ENCODE measurements at regions of chrX and their contacts with region 1.

Region 1: GRCh38 chrX:48917139-48918001 is 1.5 kb downstream of the PIM2 start:
- DNase-seq: peak; percentile 88
- ATAC-seq: peak; percentile 64
- H3K4me3 ChIP-seq: peak overlapping the region; percentile 47 to 85 (median 75); a peak in 5 of 6 replicates
- H3K27ac ChIP-seq: peak overlapping the region; percentile 54
- H3K4me1 ChIP-seq: peaks cover 31% of the 10 kb centered on the region
- H3K27me3 ChIP-seq: no peaks in the 10 kb centered on the region
- CTCF ChIP-seq: peak; percentile 91
- EP300 ChIP-seq: no peak
- POLR2A ChIP-seq: no peak
- RAD21 ChIP-seq: peak; percentile 32

Region 2: GRCh38 chrX:48648336-48648751 is 269.0 kb before region 1 on chrX:
- CTCF ChIA-PET with region 1: no interaction called
- POLR2A ChIA-PET with region 1: no interaction called
- in situ Hi-C with region 1: no loop called
- intact Hi-C with region 1: loop called (anchors 5 kb)
- DNase-seq: peak; percentile 28
- ATAC-seq: peak; percentile 69
- H3K4me3 ChIP-seq: no peak overlapping the region
- H3K27ac ChIP-seq: no peak overlapping the region
- H3K4me1 ChIP-seq: no peaks in the 10 kb centered on the region
- H3K27me3 ChIP-seq: 0 out of 5 replicates have a peak, but pooled peaks cover 0 to 3% of the 10 kb centered on the region in 2 experiments
- CTCF ChIP-seq: peak; percentile 63
- EP300 ChIP-seq: no peak
- POLR2A ChIP-seq: no peak
- RAD21 ChIP-seq: no peak

Region 3: DNA sequence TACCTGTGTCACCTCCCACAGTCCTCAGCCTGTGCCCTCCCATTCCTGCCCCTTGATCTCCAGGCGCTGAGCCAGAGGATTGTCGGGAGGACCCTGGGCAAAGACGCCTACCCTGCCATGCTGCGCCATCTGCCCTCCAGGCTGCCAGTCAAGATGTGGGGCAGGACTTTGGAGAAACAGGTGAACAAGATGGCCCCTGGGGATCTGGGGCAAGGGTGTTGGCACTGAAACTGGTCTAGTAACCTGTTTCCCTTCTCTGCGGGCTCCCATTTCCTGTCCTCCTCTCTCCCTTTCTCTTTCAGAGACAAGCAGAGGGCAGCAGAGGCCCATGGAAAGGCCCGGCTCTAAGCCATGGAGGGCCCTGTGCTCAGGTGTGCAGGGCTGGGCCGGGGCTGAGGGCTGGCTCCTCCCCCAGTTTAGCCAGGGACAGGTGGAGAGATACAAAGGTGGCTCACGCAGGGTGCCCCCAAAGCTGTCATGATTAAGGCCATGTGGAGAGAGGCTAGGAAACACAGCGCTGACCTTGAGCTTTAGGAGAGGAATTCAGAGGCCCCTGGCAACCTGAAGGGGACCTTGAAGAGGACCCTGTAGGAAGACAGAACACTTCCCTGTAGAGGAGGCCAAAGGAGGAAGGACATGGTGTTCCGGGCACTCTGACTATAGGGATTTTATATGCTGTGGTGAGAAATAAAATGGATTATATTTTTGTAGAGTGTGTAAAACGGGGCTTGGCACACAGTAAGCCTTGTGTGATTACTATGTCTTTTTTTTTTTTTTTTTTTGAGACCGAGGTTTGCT is 155.5 kb before region 1 on chrX and contains the start of gene GLOD5:
- CTCF ChIA-PET with region 1: interaction called, 5 read pairs
- POLR2A ChIA-PET with region 1: no interaction called
- in situ Hi-C with region 1: no loop called
- intact Hi-C with region 1: loop called (anchors 10 kb)
- DNase-seq: peak; percentile 45
- ATAC-seq: peak; percentile 99
- H3K4me3 ChIP-seq: peak within 1 kb of the TSS; percentile 35 to 62 (median 59); a peak in 4 of 6 replicates
- H3K27ac ChIP-seq: no peak within 1 kb of the TSS
- H3K4me1 ChIP-seq: peaks cover 7% of the 10 kb centered on the region; the same call in 1 of the 2 replicates
- H3K27me3 ChIP-seq: no peaks in the 10 kb centered on the region
- CTCF ChIP-seq: peak; percentile 86
- EP300 ChIP-seq: no peak
- POLR2A ChIP-seq: no peak
- RAD21 ChIP-seq: peak; percentile 74
- total RNA-seq, gene GLOD5: 0.73 and 0.93 TPM in 2 replicates

Region 4: DNA sequence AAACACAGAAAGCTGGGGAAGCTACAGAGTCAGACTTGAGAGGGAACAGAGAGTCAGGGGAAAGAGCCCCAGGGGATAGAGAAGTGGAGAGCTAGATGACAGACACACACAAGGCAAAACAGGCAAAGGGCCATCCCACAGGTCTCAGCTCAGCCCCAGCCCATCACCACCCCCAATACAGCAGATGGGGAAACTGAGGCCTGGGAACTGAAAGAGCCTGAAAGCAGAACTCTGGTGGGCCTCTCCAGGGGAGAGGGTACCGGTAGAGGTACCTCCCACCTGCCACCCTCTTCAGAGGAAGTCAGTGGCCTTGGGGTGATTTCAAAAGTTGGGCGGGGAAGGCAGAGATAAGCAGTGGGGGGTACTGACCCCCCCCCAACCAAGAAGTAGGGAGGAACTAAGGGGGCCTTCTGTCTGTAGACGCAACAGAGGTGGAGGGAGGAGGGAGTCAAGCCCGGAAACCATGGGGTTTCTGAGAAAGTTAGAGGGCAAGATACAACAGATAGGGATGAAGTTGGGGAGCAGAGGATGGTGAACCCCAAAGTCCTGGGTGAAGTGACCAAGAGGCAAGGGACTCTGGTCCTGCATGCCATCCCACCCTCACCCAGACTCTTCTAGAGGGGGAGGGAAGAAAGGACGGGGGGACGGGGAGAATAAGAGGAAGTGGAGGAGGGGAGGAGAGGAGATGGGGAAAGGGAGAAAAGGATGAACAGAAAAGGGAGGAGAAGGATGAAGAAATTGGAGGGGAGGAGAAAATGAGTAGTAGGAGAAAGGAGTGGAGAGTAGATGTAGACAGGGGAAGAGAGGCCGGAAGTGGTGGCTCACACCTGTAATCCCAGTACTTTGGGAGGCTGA is 127.8 kb before region 1 on chrX:
- CTCF ChIA-PET with region 1: no interaction called
- POLR2A ChIA-PET with region 1: no interaction called
- in situ Hi-C with region 1: no loop called
- intact Hi-C with region 1: no loop called
- DNase-seq: no peak
- ATAC-seq: no peak
- H3K4me3 ChIP-seq: no peak overlapping the region
- H3K27ac ChIP-seq: no peak overlapping the region
- H3K4me1 ChIP-seq: peaks cover 5% of the 10 kb centered on the region
- H3K27me3 ChIP-seq: no peaks in the 10 kb centered on the region; a peak in 1 of 5 replicates
- CTCF ChIP-seq: no peak
- EP300 ChIP-seq: no peak
- POLR2A ChIP-seq: no peak
- RAD21 ChIP-seq: no peak

Region 5: GRCh38 chrX:48897621-48898306 is 19.6 kb before region 1 on chrX and contains the starts of genes PQBP1 and TIMM17B:
- CTCF ChIA-PET with region 1: interaction called, 3 read pairs
- POLR2A ChIA-PET with region 1: interaction called, 42 read pairs
- in situ Hi-C with region 1: no loop called
- intact Hi-C with region 1: loop called (anchors 2 kb)
- DNase-seq: peak; percentile 93
- ATAC-seq: peak; percentile 94
- H3K4me3 ChIP-seq: peak within 1 kb of the TSS; percentile 72 to 80 (median 75); a peak in 5 of 6 replicates
- H3K27ac ChIP-seq: peak within 1 kb of the TSS; percentile 93
- H3K4me1 ChIP-seq: peaks cover 30% of the 10 kb centered on the region
- H3K27me3 ChIP-seq: no peaks in the 10 kb centered on the region
- CTCF ChIP-seq: no peak
- EP300 ChIP-seq: no peak
- POLR2A ChIP-seq: peak in 1 of 2 experiments; percentile 94; a peak in 2 of 4 replicates
- RAD21 ChIP-seq: no peak
- total RNA-seq, gene PQBP1: 80.9 and 99.4 TPM in 2 replicates
- total RNA-seq, gene TIMM17B: 53.4 and 56.0 TPM in 2 replicates